PC-9 (cell line): ENCODE measurements at regions of chr15 and their contacts with region 1.

Region 1: DNA sequence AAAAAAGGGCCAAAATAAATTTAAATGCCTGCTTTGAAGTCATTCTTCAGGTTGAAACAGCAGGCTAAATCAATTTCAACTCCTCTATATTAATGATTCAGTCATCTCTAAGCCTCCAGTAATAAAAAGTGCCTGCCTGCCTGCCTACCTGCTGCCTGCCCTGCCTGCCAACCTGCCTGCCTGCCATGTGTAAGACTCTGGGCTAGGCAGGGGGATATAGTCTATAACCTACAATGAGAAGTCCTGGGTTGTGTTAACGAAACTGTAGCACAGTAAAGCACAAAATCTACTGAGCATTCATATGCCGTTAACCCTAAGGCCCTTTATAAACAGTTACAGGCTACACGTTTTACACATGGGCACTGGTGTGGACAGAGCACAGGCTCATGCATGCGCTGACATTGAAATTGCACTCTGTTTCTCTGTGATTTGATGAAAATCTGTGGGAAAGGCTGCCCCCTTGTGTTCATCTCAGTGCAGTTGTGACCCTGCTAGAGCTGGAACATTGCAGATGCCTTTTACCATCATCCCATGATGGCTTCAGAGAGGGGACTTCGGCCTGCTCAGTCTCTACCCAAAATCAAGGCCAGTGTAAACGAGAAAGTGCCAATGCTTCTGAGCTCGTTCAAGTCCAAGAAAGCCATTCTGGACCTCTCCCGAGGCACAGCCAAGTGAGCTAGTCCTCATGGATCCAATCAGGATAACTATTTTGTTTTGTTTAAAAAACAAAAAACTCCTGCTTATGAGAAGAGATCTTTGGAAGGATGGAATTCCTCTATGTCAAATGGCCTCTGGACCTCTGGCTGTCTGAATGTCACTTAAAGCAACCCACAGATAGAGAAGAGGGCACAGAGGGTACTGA is 64.6 kb downstream of the EFL1 start:
- DNase-seq: peak; percentile 38 to 46
- H3K4me3 ChIP-seq: no peak overlapping the region
- H3K27ac ChIP-seq: no peak overlapping the region
- H3K4me1 ChIP-seq: no peaks in the 10 kb centered on the region
- H3K27me3 ChIP-seq: no peaks in the 10 kb centered on the region
- CTCF ChIP-seq: peak; percentile 78

Region 2: GRCh38 chr15:81410318-81410753 is 787.6 kb before region 1 on chr15:
- CTCF ChIA-PET with region 1: no interaction called
- POLR2A ChIA-PET with region 1: no interaction called
- intact Hi-C with region 1: loop called (anchors 2 kb)
- DNase-seq: peak in 1 of 2 experiments; percentile 5
- H3K4me3 ChIP-seq: no peak overlapping the region
- H3K27ac ChIP-seq: no peak overlapping the region
- H3K4me1 ChIP-seq: no peaks in the 10 kb centered on the region
- H3K27me3 ChIP-seq: peaks cover 29% of the 10 kb centered on the region; the same call in 1 of the 2 replicates
- CTCF ChIP-seq: peak; percentile 63

Region 3: GRCh38 chr15:81480645-81481053 is 717.3 kb before region 1 on chr15:
- CTCF ChIA-PET with region 1: no interaction called
- POLR2A ChIA-PET with region 1: no interaction called
- intact Hi-C with region 1: loop called (anchors 1 kb)
- DNase-seq: peak in 1 of 2 experiments; percentile 2
- H3K4me3 ChIP-seq: no peak overlapping the region
- H3K27ac ChIP-seq: no peak overlapping the region
- H3K4me1 ChIP-seq: no peaks in the 10 kb centered on the region
- H3K27me3 ChIP-seq: peaks cover 19% of the 10 kb centered on the region
- CTCF ChIP-seq: peak; percentile 92

Region 4: GRCh38 chr15:81710328-81710727 is 487.6 kb before region 1 on chr15:
- CTCF ChIA-PET with region 1: no interaction called
- POLR2A ChIA-PET with region 1: no interaction called
- intact Hi-C with region 1: no loop called
- DNase-seq: no peak
- H3K4me3 ChIP-seq: no peak overlapping the region
- H3K27ac ChIP-seq: no peak overlapping the region
- H3K4me1 ChIP-seq: no peaks in the 10 kb centered on the region
- H3K27me3 ChIP-seq: no peaks in the 10 kb centered on the region
- CTCF ChIP-seq: no peak

Region 5: GRCh38 chr15:81839387-81839786 is 358.6 kb before region 1 on chr15:
- CTCF ChIA-PET with region 1: no interaction called
- POLR2A ChIA-PET with region 1: no interaction called
- intact Hi-C with region 1: no loop called
- DNase-seq: no peak
- H3K4me3 ChIP-seq: no peak overlapping the region
- H3K27ac ChIP-seq: no peak overlapping the region
- H3K4me1 ChIP-seq: no peaks in the 10 kb centered on the region
- H3K27me3 ChIP-seq: 0 out of 2 replicates have a peak, but pooled peaks cover 2% of the 10 kb centered on the region
- CTCF ChIP-seq: no peak

Region 6: GRCh38 chr15:82030176-82030687 is 167.7 kb before region 1 on chr15:
- CTCF ChIA-PET with region 1: no interaction called
- POLR2A ChIA-PET with region 1: no interaction called
- intact Hi-C with region 1: no loop called
- DNase-seq: no peak
- H3K4me3 ChIP-seq: no peak overlapping the region
- H3K27ac ChIP-seq: no peak overlapping the region
- H3K4me1 ChIP-seq: no peaks in the 10 kb centered on the region
- H3K27me3 ChIP-seq: peaks cover 51% of the 10 kb centered on the region
- CTCF ChIP-seq: no peak

Region 7: GRCh38 chr15:82108489-82109078 is 89.4 kb before region 1 on chr15:
- CTCF ChIA-PET with region 1: interaction called, 10 read pairs
- POLR2A ChIA-PET with region 1: no interaction called
- intact Hi-C with region 1: loop called (anchors 1 kb)
- DNase-seq: peak in 1 of 2 experiments; percentile 79
- H3K4me3 ChIP-seq: no peak overlapping the region
- H3K27ac ChIP-seq: no peak overlapping the region
- H3K4me1 ChIP-seq: no peaks in the 10 kb centered on the region
- H3K27me3 ChIP-seq: no peaks in the 10 kb centered on the region
- CTCF ChIP-seq: peak; percentile 91